CD4-positive, alpha-beta memory T cell (primary cell): ENCODE measurements at regions of chr14 and their contacts with region 1.

Region 1: DNA sequence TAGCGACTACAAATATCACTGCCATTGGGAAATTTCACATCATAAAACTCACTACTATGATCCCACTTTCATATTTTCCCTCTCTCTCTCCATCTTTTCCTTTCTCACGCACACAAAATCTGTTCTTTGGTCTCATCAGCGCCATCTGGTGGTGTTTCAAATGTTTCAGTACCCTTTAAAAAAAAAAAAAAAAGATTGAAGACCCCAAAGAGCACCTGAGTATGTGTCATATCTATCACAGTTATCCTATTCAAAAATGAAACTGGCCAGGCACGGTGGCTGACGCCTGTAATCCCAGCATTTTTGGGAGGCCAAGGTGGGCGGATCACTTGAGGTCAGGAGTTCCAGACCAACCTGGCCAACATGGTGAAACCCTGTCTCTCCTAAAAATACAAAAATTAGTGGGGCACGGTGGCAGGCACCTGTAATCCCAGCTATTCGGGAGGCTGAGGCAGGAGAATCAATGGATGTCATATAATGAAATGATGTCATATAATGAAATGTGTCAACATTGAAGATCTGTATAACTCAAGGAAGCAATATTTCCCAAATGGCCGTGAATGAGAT is 72.4 kb downstream of the TTC9 start:
- DNase-seq: peak in 4 of 5 donors; percentile 39 to 51 (median 50)
- H3K4me3 ChIP-seq: no peak overlapping the region
- H3K4me3 Mint-ChIP-seq: no peak overlapping the region
- H3K27ac ChIP-seq: no peak overlapping the region
- H3K27ac Mint-ChIP-seq: peak overlapping the region in 2 of 7 donors; percentile 2 to 60
- H3K4me1 ChIP-seq: peaks cover 5% of the 10 kb centered on the region
- H3K4me1 Mint-ChIP-seq: peaks cover 0 to 5% (median 4%) of the 10 kb centered on the region in 4 donors
- H3K27me3 ChIP-seq: no peaks in the 10 kb centered on the region
- H3K27me3 Mint-ChIP-seq: peaks cover 0 to 2% of the 10 kb centered on the region in 2 donors

Region 2: DNA sequence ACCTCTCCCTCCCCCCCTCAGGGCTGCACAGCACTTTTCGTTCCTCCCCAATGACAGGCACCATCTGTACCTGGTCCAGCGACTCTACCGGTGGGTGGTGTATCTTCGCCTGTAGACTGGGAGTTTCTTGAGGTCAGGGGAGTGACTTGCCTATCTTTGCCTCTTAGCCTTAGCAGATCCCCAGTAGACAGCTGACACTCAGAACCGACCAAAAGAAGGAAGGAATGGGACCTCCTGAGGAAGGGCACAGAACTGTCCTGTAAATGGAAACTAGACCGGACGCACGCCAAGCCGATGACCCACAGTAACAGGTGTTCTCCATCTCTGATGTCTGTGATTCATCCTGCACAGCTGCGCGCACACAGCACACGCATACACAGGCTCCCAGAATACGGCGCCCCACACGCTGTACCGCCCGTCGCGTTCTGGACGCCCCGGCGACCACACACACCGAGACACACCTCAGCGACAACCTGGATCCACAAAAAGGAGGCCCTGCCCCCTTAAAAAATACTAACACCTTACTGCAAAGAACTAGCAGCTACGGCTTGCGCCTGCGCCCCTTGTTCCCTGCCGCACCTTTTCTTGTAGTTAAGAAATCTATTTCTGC is 73.1 kb before region 1 on chr14:
- CTCF ChIA-PET with region 1: interaction called, 13 read pairs
- POLR2A ChIA-PET with region 1: interaction called, 9 read pairs
- intact Hi-C with region 1: loop called (anchors 1 kb)
- DNase-seq: peak; percentile 52 to 78 (median 59)
- H3K4me3 ChIP-seq: peak overlapping the region; percentile 78 to 85
- H3K4me3 Mint-ChIP-seq: peak overlapping the region; percentile 95 to 100 (median 97)
- H3K27ac ChIP-seq: peak overlapping the region; percentile 56
- H3K27ac Mint-ChIP-seq: peak overlapping the region; percentile 88 to 98 (median 95)
- H3K4me1 ChIP-seq: peaks cover 48% of the 10 kb centered on the region
- H3K4me1 Mint-ChIP-seq: peaks cover 35 to 64% (median 47%) of the 10 kb centered on the region in 4 donors
- H3K27me3 ChIP-seq: no peaks in the 10 kb centered on the region
- H3K27me3 Mint-ChIP-seq: peaks cover 0 to 1% of the 10 kb centered on the region in 2 donors

Region 3: DNA sequence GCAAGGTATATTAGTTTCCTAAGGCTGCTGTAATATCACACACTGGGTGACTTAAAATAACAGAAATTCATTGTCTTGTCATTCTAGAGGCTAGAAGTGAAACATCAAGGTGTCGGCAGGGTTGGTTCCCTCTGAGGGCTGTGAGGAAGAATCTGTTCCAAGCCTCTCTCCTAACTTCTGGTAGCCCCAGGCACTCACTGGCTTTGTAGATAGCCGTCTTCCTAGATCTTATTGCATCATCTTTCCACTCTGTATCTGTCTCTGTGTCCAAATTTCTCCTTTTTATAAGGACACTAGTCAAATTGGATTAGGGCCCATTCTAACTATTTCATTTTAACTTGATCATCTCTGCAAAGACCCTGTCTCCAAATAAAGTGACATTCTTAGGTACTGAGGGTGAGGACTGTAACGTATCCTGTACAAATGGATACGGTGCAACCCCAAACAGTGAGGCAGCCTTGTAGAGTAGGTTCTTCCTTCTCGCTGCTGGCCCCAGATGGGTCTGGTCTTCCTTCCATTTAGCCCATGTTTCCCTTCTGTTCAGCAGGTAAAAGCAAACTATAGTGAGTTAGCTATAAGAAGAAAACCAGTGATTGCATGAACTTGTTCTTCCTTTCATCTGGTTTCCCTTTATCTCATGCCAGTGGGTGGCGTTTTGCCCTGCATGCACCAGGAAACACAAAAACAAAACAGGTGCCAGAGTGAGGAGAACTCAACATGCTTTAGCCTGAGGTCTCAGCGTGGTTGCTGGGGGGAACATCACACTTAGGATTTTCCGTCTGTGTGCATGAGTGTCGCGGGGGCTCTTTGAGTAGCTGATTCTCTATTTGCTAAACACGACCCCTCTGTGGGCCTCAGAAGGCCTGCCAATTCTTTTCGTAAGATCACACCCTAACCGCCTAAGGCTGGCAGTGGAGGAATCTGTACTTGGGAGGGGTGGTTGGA is 52.9 kb before region 1 on chr14:
- CTCF ChIA-PET with region 1: interaction called, 58 read pairs
- POLR2A ChIA-PET with region 1: interaction called, 4 read pairs
- intact Hi-C with region 1: loop called (anchors 1 kb)
- DNase-seq: peak; percentile 55 to 72 (median 60)
- H3K4me3 ChIP-seq: no peak overlapping the region
- H3K4me3 Mint-ChIP-seq: peak overlapping the region; percentile 26 to 80 (median 68)
- H3K27ac ChIP-seq: peak overlapping the region; percentile 49
- H3K27ac Mint-ChIP-seq: peak overlapping the region; percentile 88 to 98 (median 93)
- H3K4me1 ChIP-seq: peaks cover 79% of the 10 kb centered on the region
- H3K4me1 Mint-ChIP-seq: peaks cover 67 to 94% (median 79%) of the 10 kb centered on the region in 4 donors
- H3K27me3 ChIP-seq: no peaks in the 10 kb centered on the region
- H3K27me3 Mint-ChIP-seq: no peaks in the 10 kb centered on the region

Region 4: DNA sequence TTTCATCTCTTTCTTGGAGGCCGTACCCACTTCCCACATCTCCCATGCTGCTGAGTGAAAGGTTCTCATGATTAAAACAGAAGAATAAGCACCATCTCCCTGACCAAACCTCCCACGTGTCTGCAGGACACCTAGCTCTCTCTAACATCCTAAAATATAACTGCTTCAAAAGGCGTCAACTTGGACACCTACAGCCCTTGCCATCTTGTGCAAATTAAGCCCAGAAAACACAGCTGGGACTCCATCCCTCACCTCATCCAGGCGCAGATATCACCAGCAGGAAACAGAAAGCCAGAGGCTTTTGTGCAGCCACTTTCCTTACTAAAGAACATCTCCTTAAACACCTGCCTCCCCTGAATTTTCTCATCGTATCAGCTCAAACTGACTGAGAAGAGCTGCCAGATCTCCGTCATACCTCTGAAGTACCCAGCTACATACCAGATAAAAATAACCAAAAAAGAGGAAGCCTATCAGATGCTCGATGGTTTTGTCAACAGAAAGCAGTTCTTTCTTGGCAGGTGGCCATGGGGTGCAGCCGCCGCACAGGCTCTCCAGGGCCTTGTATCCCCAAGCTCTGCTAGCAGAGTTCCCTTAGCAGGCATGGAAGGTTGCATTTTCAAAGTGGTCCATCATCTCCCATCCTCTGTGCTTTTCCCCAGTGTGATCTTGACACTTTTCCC is 66.4 kb after region 1 on chr14:
- CTCF ChIA-PET with region 1: no interaction called
- POLR2A ChIA-PET with region 1: no interaction called
- intact Hi-C with region 1: no loop called
- DNase-seq: no peak
- H3K4me3 ChIP-seq: no peak overlapping the region
- H3K4me3 Mint-ChIP-seq: no peak overlapping the region
- H3K27ac ChIP-seq: no peak overlapping the region
- H3K27ac Mint-ChIP-seq: no peak overlapping the region
- H3K4me1 ChIP-seq: peaks cover 9% of the 10 kb centered on the region
- H3K4me1 Mint-ChIP-seq: peaks cover 3 to 14% (median 8%) of the 10 kb centered on the region in 4 donors
- H3K27me3 ChIP-seq: no peaks in the 10 kb centered on the region
- H3K27me3 Mint-ChIP-seq: no peaks in the 10 kb centered on the region

Region 5: DNA sequence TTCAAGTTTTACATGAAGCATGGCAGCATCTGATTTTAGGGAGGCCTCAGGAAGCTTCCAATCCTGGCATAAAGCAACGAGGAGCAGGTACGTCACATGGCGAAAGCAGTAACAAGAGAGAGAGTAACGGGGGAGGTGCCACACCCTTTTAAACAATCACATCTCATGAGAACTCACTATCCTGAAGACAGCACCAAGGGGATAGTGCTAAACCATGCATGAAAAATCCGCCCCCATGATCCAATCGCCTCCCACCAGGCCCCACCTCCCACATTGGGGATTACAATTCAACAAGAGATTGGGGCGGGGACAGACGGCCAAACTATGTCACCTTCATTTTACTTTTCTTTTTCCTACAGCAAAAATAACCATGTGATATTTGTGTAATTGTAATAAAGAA is 102.4 kb after region 1 on chr14:
- CTCF ChIA-PET with region 1: interaction called, 17 read pairs
- POLR2A ChIA-PET with region 1: no interaction called
- intact Hi-C with region 1: loop called (anchors 1 kb)
- DNase-seq: no peak
- H3K4me3 ChIP-seq: no peak overlapping the region
- H3K4me3 Mint-ChIP-seq: no peak overlapping the region
- H3K27ac ChIP-seq: no peak overlapping the region
- H3K27ac Mint-ChIP-seq: peak overlapping the region in 2 of 7 donors; percentile 23 to 78
- H3K4me1 ChIP-seq: peaks cover 11% of the 10 kb centered on the region
- H3K4me1 Mint-ChIP-seq: peaks cover 4 to 10% (median 6%) of the 10 kb centered on the region in 4 donors
- H3K27me3 ChIP-seq: no peaks in the 10 kb centered on the region
- H3K27me3 Mint-ChIP-seq: no peaks in the 10 kb centered on the region

Region 6: DNA sequence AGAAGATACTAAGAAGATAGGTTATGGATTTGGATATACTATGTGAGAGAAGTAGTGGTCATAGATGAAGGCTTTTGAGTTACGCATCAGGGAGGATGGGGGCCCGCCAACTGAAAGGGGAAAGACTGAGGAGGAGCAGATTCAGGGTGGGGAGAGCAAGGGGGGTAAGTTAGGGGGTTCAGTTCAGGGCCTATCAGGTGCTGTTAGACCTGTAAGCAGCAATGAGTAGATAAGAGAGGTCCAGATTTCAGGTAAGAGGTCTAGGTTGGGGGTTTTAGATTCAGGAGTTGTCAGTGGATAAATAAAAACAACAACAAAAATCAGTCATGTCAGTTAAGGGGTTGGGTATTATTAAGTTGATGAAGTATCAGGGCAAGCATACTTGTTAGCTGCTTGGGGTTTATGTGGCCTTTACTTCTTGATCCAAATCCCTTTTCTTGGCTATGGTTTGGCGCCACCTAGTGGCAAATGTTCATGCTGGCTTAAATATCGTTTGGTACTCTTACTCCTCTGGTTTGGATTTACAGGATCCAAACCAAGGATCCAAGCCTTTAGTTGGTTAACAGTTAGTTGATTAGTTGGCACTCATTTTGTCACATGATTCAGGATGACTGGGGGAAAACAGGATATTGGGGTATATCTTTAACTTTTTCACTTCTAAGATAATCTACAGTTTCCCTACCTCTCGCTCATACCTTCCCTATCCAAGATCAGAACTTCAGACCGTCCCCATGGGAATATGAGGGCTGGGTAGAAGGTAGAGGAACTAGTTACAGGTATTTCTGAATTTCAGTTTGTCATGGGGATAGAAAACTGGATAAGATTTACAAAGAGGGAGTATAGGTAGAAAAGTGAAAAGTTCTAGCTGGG is 258.2 kb after region 1 on chr14:
- CTCF ChIA-PET with region 1: no interaction called
- POLR2A ChIA-PET with region 1: no interaction called
- intact Hi-C with region 1: loop called (anchors 5 kb)
- DNase-seq: peak; percentile 72 to 82 (median 78)
- H3K4me3 ChIP-seq: no peak overlapping the region
- H3K4me3 Mint-ChIP-seq: peak overlapping the region in 4 of 8 donors; percentile 20 to 63 (median 46)
- H3K27ac ChIP-seq: peak overlapping the region; percentile 4
- H3K27ac Mint-ChIP-seq: peak overlapping the region; percentile 67 to 90 (median 87)
- H3K4me1 ChIP-seq: peaks cover 48% of the 10 kb centered on the region
- H3K4me1 Mint-ChIP-seq: peaks cover 40 to 67% (median 52%) of the 10 kb centered on the region in 4 donors
- H3K27me3 ChIP-seq: no peaks in the 10 kb centered on the region
- H3K27me3 Mint-ChIP-seq: no peaks in the 10 kb centered on the region